Sigmoid colon (tissue), 7 donors: ENCODE measurements at regions of chr12 and their contacts with region 1.

Region 1: GRCh38 chr12:48936379-48936979 is 11.2 kb upstream of the FKBP11 start:
- DNase-seq: peak; percentile 81
- H3K4me3 ChIP-seq: no peak overlapping the region
- H3K27ac ChIP-seq: no peak overlapping the region
- H3K4me1 ChIP-seq: peaks cover 0 to 8% (median 2%) of the 10 kb centered on the region in 4 donors
- H3K27me3 ChIP-seq: no peaks in the 10 kb centered on the region
- CTCF ChIP-seq: peak; percentile 44 to 94 (median 80)
- EP300 ChIP-seq: no peak
- POLR2A ChIP-seq: no peak

Region 2: GRCh38 chr12:48852734-48853688 is 83.5 kb before region 1 on chr12:
- intact Hi-C with region 1: loop called (anchors 1 kb)
- DNase-seq: peak; percentile 94
- H3K4me3 ChIP-seq: peak overlapping the region; percentile 22 to 92 (median 85)
- H3K27ac ChIP-seq: peak overlapping the region; percentile 80 to 89 (median 86)
- H3K4me1 ChIP-seq: peaks cover 0 to 33% (median 24%) of the 10 kb centered on the region in 4 donors
- H3K27me3 ChIP-seq: no peaks in the 10 kb centered on the region
- CTCF ChIP-seq: peak; percentile 81 to 92 (median 90)
- EP300 ChIP-seq: no peak
- POLR2A ChIP-seq: no peak

Region 3: GRCh38 chr12:48903982-48904411 is 32.5 kb before region 1 on chr12:
- intact Hi-C with region 1: loop called (anchors 5 kb)
- DNase-seq: peak; percentile 84
- H3K4me3 ChIP-seq: peak overlapping the region; percentile 5 to 43 (median 38)
- H3K27ac ChIP-seq: no peak overlapping the region
- H3K4me1 ChIP-seq: peaks cover 0 to 8% (median 2%) of the 10 kb centered on the region in 4 donors
- H3K27me3 ChIP-seq: no peaks in the 10 kb centered on the region
- CTCF ChIP-seq: peak in 1 of 4 experiments; percentile 55
- EP300 ChIP-seq: no peak
- POLR2A ChIP-seq: no peak